Heart right ventricle (tissue), 16 donors: ENCODE measurements at regions of chr6 and their contacts with region 1.

Region 1: GRCh38 chr6:53986165-53986720 is 125.0 kb upstream of the MLIP start:
- DNase-seq: peak in 1 of 2 donors; percentile 47
- ATAC-seq: peak; percentile 29 to 88 (median 77)
- H3K4me3 ChIP-seq: peak overlapping the region in 1 of 10 donors; percentile 16
- H3K27ac ChIP-seq: peak overlapping the region in 4 of 10 donors; percentile 34 to 66 (median 56)
- H3K4me1 ChIP-seq: peaks cover 0 to 46% (median 28%) of the 10 kb centered on the region in 9 donors
- H3K27me3 ChIP-seq: no peaks in the 10 kb centered on the region
- CTCF ChIP-seq: peak; percentile 32 to 86 (median 71)

Region 2: GRCh38 chr6:54188846-54189245 is 202.6 kb after region 1 on chr6:
- intact Hi-C with region 1: loop called in 1 of 10 experiments (anchors 10 kb)
- DNase-seq: no peak
- ATAC-seq: no peak
- H3K4me3 ChIP-seq: no peak overlapping the region
- H3K27ac ChIP-seq: peak overlapping the region in 1 of 10 donors; percentile 26
- H3K4me1 ChIP-seq: peaks cover 0 to 20% (median 12%) of the 10 kb centered on the region in 9 donors
- H3K27me3 ChIP-seq: no peaks in the 10 kb centered on the region
- CTCF ChIP-seq: no peak

Region 3: DNA sequence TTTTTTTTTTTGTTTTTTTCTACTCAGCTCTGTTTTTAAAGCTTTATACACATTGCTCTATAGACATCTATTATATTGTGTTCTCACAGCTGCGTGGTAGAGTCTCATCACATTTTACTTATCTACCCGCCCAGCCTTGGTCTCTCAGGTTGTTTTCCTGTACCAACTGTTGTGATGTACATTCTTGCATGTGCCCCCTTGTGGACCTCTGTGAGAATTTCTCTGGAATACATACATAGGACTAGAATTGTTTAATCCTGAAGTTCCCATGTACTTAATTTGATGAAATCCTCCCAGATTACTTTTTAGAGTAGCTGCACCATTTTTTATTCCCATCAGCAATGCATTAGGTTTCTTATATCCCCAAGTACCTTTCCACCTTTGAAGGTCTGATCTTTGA is 281.6 kb after region 1 on chr6:
- intact Hi-C with region 1: loop called in 7 of 10 experiments (anchors 5 to 10 kb)
- DNase-seq: no peak
- ATAC-seq: no peak
- H3K4me3 ChIP-seq: no peak overlapping the region
- H3K27ac ChIP-seq: no peak overlapping the region
- H3K4me1 ChIP-seq: peaks cover 0 to 9% (median 0%) of the 10 kb centered on the region in 9 donors
- H3K27me3 ChIP-seq: no peaks in the 10 kb centered on the region
- CTCF ChIP-seq: peak in 7 of 9 donors; percentile 27 to 52 (median 38)

Region 4: GRCh38 chr6:54700158-54700557 is 713.9 kb after region 1 on chr6:
- intact Hi-C with region 1: loop called in 1 of 10 experiments (anchors 10 kb)
- DNase-seq: no peak
- ATAC-seq: no peak
- H3K4me3 ChIP-seq: no peak overlapping the region
- H3K27ac ChIP-seq: no peak overlapping the region
- H3K4me1 ChIP-seq: no peaks in the 10 kb centered on the region
- H3K27me3 ChIP-seq: no peaks in the 10 kb centered on the region
- CTCF ChIP-seq: no peak

Region 5: GRCh38 chr6:55069132-55069781 is 1083.0 kb after region 1 on chr6:
- intact Hi-C with region 1: loop called in 6 of 10 experiments (anchors 5 to 10 kb)
- DNase-seq: peak in 1 of 2 donors; percentile 11
- ATAC-seq: peak in 1 of 8 donors; percentile 41
- H3K4me3 ChIP-seq: no peak overlapping the region
- H3K27ac ChIP-seq: no peak overlapping the region
- H3K4me1 ChIP-seq: peaks cover 0 to 7% (median 0%) of the 10 kb centered on the region in 9 donors
- H3K27me3 ChIP-seq: no peaks in the 10 kb centered on the region
- CTCF ChIP-seq: peak; percentile 20 to 65 (median 59)